ENCODE measurements at regions of chr15 and their contacts with region 1.

Region 1: DNA sequence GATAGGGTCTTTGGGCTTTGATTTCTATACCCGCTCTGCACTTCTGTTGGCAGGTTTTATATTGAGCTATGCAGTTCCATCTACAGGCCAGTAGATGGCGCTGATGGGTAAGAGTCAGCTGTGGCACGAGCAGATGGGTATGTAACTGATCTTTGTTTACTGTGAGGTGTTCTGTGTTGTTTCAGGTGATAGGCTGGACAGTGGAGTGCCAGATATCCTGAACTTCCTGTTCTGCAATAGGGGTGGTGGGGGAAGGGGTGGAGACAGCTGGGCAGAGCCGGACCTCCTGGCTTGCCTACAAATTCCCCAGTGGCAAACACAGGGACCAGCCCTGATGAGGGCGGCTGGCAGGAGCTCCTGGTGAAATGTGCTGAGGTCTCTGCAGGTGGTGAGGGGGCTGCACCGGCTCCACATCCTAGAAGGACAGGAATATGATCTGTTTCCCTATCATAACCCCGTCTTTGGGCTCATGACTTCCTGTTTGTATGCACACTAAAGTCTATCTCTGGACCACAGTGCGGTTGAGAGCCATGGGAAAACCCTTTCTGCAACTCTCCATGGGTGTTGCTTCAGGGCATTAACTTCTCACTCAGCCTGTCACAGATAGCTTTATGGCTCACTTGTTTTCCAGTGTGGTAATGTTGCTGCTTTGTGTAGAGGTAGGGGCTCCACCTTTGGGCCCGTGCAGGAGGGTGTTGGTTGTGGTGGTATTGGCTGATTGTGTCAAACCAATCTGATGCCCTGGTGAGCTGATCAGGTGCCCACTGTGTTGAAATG is 13.4 kb upstream of the FAM98B start:
- DNase-seq: peak; percentile 58
- H3K4me3 ChIP-seq: no peak overlapping the region; a peak in 1 of 4 replicates
- H3K27ac ChIP-seq: no peak overlapping the region; a peak in 1 of 4 replicates
- H3K4me1 ChIP-seq: peaks cover 0 to 7% of the 10 kb centered on the region in 2 experiments; a peak in 1 of 4 replicates
- H3K27me3 ChIP-seq: 0 out of 2 replicates have a peak, but pooled peaks cover 9% of the 10 kb centered on the region
- CTCF ChIP-seq: peak; percentile 94
- EP300 ChIP-seq: no peak
- RAD21 ChIP-seq: peak; percentile 88

Region 2: GRCh38 chr15:38217191-38217595 is 223.3 kb before region 1 on chr15:
- CTCF ChIA-PET with region 1: no interaction called
- POLR2A ChIA-PET with region 1: no interaction called
- DNase-seq: no peak
- H3K4me3 ChIP-seq: no peak overlapping the region
- H3K27ac ChIP-seq: no peak overlapping the region
- H3K4me1 ChIP-seq: peaks cover 0 to 4% of the 10 kb centered on the region in 2 experiments; a peak in 2 of 4 replicates
- H3K27me3 ChIP-seq: no peaks in the 10 kb centered on the region
- CTCF ChIP-seq: no peak
- EP300 ChIP-seq: no peak
- RAD21 ChIP-seq: no peak

Region 3: GRCh38 chr15:38427380-38427779 is 13.2 kb before region 1 on chr15:
- CTCF ChIA-PET with region 1: interaction called, 31 read pairs
- POLR2A ChIA-PET with region 1: no interaction called
- DNase-seq: no peak
- H3K4me3 ChIP-seq: no peak overlapping the region
- H3K27ac ChIP-seq: no peak overlapping the region
- H3K4me1 ChIP-seq: no peaks in the 10 kb centered on the region
- H3K27me3 ChIP-seq: peaks cover 7% of the 10 kb centered on the region; the same call in 1 of the 2 replicates
- CTCF ChIP-seq: no peak
- EP300 ChIP-seq: no peak
- RAD21 ChIP-seq: no peak

Region 4: GRCh38 chr15:38463893-38464292 is 23.4 kb after region 1 on chr15:
- CTCF ChIA-PET with region 1: interaction called, 11 read pairs
- POLR2A ChIA-PET with region 1: no interaction called
- DNase-seq: no peak
- H3K4me3 ChIP-seq: no peak overlapping the region
- H3K27ac ChIP-seq: no peak overlapping the region
- H3K4me1 ChIP-seq: peaks cover 5 to 7% of the 10 kb centered on the region in 2 experiments; a peak in 1 of 4 replicates
- H3K27me3 ChIP-seq: no peaks in the 10 kb centered on the region
- CTCF ChIP-seq: no peak
- EP300 ChIP-seq: no peak
- RAD21 ChIP-seq: no peak

Region 5: DNA sequence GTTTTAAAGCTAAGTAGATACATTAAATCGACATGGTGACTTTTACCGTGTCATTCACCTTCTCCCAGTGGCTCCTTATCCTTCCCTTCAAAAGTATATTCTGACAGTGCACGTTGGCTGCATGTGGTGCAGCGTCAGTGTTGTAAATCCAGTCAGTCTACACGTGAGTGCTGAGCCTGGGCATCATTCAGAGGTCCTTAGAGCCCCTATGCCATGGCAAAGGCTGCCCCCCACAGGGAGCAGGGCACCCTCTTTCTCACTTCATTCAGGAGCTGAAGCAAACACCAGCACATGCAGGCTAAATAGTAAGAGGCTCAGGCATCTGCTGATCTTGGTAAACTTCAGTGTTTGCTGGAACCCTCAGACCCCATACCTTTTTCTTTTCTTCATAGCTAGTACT is 80.8 kb after region 1 on chr15:
- CTCF ChIA-PET with region 1: interaction called, 15 read pairs
- POLR2A ChIA-PET with region 1: no interaction called
- DNase-seq: peak; percentile 9
- H3K4me3 ChIP-seq: no peak overlapping the region
- H3K27ac ChIP-seq: no peak overlapping the region
- H3K4me1 ChIP-seq: no peaks in the 10 kb centered on the region
- H3K27me3 ChIP-seq: no peaks in the 10 kb centered on the region
- CTCF ChIP-seq: no peak
- EP300 ChIP-seq: no peak
- RAD21 ChIP-seq: peak; percentile 46; the same call in 1 of the 2 replicates

Region 6: DNA sequence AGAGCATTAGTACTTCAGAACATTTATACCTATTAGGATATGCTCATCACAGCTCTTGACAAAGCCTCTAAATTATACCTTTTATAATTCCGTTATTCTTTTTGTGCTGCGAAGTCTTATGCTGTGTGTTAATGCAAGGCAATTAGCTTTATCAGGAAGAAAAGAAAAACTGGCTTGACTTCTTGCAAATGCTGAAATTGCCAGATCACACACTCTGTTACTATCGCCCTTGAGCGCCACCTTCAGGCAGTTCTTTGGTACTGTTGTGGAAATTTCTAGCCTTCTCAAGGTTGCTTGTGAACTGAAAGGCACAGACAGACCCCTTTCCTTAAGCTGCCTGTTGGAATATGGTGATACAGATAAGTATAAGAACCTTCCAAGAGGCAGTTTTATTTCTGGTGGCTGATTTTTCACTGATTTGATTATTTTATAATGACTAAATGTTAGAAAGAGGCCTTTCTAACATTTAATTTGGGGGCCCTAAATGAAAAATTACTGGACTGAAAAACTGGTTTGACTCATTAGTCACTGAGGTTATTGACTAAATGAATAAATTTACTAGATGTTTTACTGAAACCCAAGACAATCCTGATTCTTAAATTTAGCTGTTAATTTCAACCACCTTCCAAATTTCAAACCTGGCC is 250.3 kb after region 1 on chr15:
- CTCF ChIA-PET with region 1: interaction called, 101 read pairs
- POLR2A ChIA-PET with region 1: no interaction called
- DNase-seq: peak; percentile 32
- H3K4me3 ChIP-seq: no peak overlapping the region
- H3K27ac ChIP-seq: no peak overlapping the region
- H3K4me1 ChIP-seq: peaks cover 0 to 22% of the 10 kb centered on the region in 2 experiments; a peak in 2 of 4 replicates
- H3K27me3 ChIP-seq: no peaks in the 10 kb centered on the region
- CTCF ChIP-seq: peak; percentile 86
- EP300 ChIP-seq: no peak
- RAD21 ChIP-seq: peak; percentile 70